Activated CD8-positive, alpha-beta memory T cell treated with anti-CD3 and anti-CD28 coated beads, Interleukin-2, amount 10 ng/mL, durations not matched to agents 7 days and 5 days (primary cell): ENCODE measurements at regions of chr6 and their contacts with region 1.

Region 1: DNA sequence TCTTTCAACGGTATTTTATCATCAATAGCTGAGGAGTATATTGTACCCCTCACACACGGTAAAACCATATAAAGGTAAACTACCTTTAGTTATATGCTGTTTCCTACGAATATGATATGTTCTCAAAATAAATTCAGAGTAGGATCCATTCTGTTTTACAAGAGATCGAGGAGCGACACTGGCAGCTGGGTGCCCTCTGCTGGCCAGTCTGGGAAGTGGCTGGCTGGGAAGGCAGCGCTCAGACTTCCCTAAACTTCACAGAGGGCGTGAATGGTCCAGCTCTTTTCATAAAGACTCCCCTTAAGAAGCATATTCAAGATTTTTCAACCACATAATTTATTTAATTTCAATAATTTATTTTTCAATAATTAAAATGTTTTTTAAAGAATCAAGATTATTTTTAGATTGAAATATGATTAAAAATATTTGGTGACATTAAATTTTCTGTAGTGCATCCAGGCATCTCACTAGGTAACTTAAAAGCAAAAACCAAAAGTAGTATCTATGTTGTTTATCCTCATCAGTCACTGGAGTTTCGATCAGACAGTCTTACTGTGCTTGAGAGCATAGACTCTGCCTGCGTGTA is 187.5 kb upstream of the PDE10A start:
- DNase-seq: peak; percentile 53
- ATAC-seq: peak; percentile 51
- H3K4me3 Mint-ChIP-seq: no peak overlapping the region
- H3K27ac Mint-ChIP-seq: no peak overlapping the region
- H3K4me1 Mint-ChIP-seq: peaks cover 5% of the 10 kb centered on the region
- H3K27me3 Mint-ChIP-seq: peaks cover 59% of the 10 kb centered on the region

Region 2: DNA sequence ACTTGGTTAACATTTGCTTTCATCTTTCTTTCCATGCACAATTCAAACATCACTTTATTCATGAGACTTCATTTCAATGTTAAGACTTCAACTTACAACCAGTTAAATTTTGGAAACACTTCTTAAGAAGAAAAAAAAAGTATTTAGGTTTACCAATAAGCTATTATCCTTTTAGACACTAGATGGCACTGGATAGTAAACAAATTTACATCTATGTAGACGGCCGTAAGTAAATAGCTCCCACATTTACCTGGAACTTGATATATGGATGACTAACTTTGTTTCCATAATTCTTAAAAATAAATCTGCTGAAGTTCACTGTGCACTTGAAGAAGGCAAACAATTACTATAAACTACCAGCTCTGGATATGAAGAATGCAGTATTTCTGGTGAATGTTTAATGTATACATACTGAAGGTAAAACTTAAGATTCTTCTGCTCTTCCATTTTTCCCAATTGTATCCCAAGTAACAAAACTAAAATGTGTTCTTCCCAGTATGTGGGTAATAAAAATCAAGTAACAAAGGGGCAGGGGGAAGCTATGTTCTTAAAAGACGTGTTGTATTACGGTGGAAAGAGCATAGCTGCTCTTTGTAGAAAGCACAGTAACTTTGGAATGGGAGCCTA is 410.5 kb before region 1 on chr6:
- CTCF ChIA-PET with region 1: interaction called, 18 read pairs
- DNase-seq: no peak
- ATAC-seq: no peak
- H3K4me3 Mint-ChIP-seq: no peak overlapping the region
- H3K27ac Mint-ChIP-seq: no peak overlapping the region
- H3K4me1 Mint-ChIP-seq: no peaks in the 10 kb centered on the region
- H3K27me3 Mint-ChIP-seq: no peaks in the 10 kb centered on the region

Region 3: DNA sequence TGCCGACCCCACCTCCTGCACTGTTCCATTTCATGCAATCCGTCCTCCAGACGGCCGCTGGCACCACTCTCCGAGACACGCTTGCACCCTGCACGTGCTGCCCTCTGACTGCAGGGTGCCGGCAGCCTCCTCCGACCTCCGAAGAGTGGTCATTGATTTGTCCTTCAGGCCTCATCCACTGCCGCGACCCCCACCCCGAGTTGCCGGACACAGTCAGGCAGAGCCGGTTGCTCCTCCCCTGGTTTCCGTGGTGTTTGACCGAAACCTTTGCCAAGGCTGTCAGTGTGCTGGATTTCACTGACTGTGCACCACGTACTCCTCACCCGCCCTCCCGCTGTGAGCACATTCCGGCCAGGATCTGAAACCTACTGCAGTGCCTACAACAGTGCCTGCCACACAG is 31.1 kb before region 1 on chr6:
- CTCF ChIA-PET with region 1: no interaction called
- DNase-seq: no peak
- ATAC-seq: no peak
- H3K4me3 Mint-ChIP-seq: no peak overlapping the region
- H3K27ac Mint-ChIP-seq: no peak overlapping the region
- H3K4me1 Mint-ChIP-seq: no peaks in the 10 kb centered on the region
- H3K27me3 Mint-ChIP-seq: peaks cover 27% of the 10 kb centered on the region